CD4-positive, alpha-beta memory T cell (primary cell): ENCODE measurements at regions of chr19 and their contacts with region 1.

Region 1: GRCh38 chr19:47013041-47013517 is 6.6 kb upstream of the NPAS1 start:
- DNase-seq: peak; percentile 51 to 62 (median 53)
- H3K4me3 ChIP-seq: no peak overlapping the region
- H3K4me3 Mint-ChIP-seq: peak overlapping the region in 6 of 8 donors; percentile 6 to 65 (median 30)
- H3K27ac ChIP-seq: no peak overlapping the region
- H3K27ac Mint-ChIP-seq: peak overlapping the region in 2 of 7 donors; percentile 53 to 57
- H3K4me1 ChIP-seq: peaks cover 7% of the 10 kb centered on the region
- H3K4me1 Mint-ChIP-seq: peaks cover 8 to 9% (median 9%) of the 10 kb centered on the region in 4 donors
- H3K27me3 ChIP-seq: no peaks in the 10 kb centered on the region
- H3K27me3 Mint-ChIP-seq: peaks cover 5 to 10% of the 10 kb centered on the region in 2 donors

Region 2: DNA sequence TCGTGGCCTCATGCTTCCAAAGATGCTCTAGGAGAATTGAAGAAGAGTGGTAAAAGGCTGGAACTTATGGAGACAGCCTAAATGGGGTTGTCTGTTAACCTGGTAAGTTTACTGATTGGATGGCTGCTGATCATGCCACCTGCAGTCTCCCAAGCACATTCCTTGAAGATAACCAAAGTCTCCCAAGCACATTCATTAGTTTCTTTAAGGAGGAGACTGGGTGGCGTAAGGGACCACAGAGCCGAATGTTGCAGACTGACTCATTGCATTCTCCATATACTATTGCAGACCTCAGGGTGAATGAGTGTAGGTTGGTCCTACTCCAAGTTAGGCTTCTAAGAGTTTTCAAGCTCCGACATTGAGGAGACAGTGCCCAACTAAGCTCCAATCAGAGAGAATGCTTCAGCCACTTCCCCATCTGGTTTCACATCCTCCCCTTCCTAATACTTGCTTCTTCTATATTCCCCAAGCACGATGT is 888.4 kb before region 1 on chr19 and contains the start of gene IGFL3:
- CTCF ChIA-PET with region 1: no interaction called
- POLR2A ChIA-PET with region 1: no interaction called
- intact Hi-C with region 1: no loop called
- DNase-seq: no peak
- H3K4me3 ChIP-seq: no peak within 1 kb of the TSS
- H3K4me3 Mint-ChIP-seq: no peak within 1 kb of the TSS
- H3K27ac ChIP-seq: no peak within 1 kb of the TSS
- H3K27ac Mint-ChIP-seq: no peak within 1 kb of the TSS
- H3K4me1 ChIP-seq: no peaks in the 10 kb centered on the region
- H3K4me1 Mint-ChIP-seq: no peaks in the 10 kb centered on the region
- H3K27me3 ChIP-seq: no peaks in the 10 kb centered on the region
- H3K27me3 Mint-ChIP-seq: peaks cover 24 to 36% of the 10 kb centered on the region in 2 donors
- total RNA-seq, gene IGFL3: not detected

Region 3: DNA sequence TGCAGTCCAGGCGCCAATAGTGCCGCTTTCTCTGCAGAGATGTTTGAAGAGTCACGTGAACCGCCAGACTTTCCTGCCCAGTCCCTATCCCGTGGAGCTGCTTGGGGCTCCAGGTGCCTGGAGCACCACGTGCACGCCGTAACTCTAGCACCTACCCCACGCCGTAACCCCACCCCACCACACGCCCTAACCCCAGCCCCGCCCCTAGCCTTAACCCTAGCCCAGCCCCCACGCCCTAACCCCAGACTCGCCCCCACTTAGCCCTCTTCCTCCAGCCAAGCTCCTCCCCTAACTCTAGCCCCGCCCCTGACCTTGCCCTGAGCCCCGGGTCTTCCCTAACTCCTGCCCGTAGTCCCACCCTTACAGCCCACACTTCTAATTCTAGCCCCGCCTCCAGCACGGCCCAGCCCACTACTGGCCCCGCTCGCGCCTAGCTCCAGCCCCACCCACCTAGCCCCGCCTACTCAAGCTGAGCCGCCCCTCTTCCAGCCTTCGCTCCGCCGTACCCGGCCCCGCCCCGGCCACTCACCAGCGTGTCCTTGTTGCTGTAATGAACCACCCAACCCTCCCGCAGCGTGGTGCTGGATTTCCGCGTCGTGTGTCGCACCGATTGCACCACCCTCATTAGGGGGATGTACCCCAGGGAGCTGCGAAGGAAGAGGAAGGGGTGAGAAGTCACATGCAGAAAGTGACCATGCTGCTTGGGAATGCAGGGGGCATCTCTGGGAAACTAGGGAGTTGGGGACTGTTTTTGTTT is 315.7 kb before region 1 on chr19:
- CTCF ChIA-PET with region 1: no interaction called
- POLR2A ChIA-PET with region 1: no interaction called
- intact Hi-C with region 1: no loop called
- DNase-seq: peak in 1 of 5 donors; percentile 9
- H3K4me3 ChIP-seq: no peak overlapping the region
- H3K4me3 Mint-ChIP-seq: no peak overlapping the region
- H3K27ac ChIP-seq: no peak overlapping the region
- H3K27ac Mint-ChIP-seq: peak overlapping the region in 2 of 7 donors; percentile 22 to 32
- H3K4me1 ChIP-seq: no peaks in the 10 kb centered on the region
- H3K4me1 Mint-ChIP-seq: peaks cover 0 to 3% (median 0%) of the 10 kb centered on the region in 4 donors
- H3K27me3 ChIP-seq: no peaks in the 10 kb centered on the region
- H3K27me3 Mint-ChIP-seq: no peaks in the 10 kb centered on the region

Region 4: DNA sequence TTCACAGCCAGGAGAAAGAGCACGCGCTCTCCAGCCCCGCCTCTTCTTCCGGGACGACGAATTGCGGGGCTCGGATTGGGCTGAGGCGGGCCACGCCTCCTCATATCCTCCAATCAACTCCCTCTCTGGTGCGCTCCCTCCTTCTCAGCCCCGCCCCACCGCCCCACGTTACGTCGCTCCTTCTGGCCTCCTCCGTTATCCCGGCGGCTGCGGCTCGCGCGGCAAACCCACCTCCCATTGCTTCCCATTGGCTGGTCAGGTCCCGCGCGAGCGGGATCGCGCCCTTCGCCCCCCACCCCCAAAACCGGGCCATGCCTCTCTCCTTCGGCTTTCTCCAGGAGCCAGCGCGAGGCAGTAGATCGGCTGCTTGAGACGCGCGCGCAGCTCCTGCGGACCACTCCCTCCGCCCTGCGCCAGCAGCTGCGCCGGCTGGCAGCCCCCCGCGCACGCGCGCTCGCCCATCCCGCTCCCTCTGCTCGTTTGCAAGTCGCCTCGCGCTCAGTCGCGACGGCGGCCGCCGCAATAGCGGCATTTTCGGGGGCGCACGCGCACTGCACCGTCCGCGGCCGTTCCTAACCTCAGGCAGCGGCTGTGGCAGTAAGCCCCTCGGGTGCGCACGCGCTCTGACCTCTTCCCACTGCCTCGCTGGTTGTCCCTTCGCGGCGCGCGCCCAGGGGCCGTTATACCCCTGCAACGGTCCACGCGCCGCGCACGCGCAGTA is 152.8 kb before region 1 on chr19:
- CTCF ChIA-PET with region 1: interaction called, 26 read pairs
- POLR2A ChIA-PET with region 1: interaction called, 6 read pairs
- intact Hi-C with region 1: loop called (anchors 5 kb)
- DNase-seq: peak; percentile 93 to 96 (median 94)
- H3K4me3 ChIP-seq: peak overlapping the region; percentile 42 to 78
- H3K4me3 Mint-ChIP-seq: peak overlapping the region; percentile 91 to 98 (median 95)
- H3K27ac ChIP-seq: peak overlapping the region; percentile 79
- H3K27ac Mint-ChIP-seq: peak overlapping the region; percentile 94 to 99 (median 97)
- H3K4me1 ChIP-seq: peaks cover 62% of the 10 kb centered on the region
- H3K4me1 Mint-ChIP-seq: peaks cover 19 to 22% (median 19%) of the 10 kb centered on the region in 4 donors
- H3K27me3 ChIP-seq: no peaks in the 10 kb centered on the region
- H3K27me3 Mint-ChIP-seq: no peaks in the 10 kb centered on the region

Region 5: GRCh38 chr19:46924874-46925547 is 88.1 kb before region 1 on chr19:
- CTCF ChIA-PET with region 1: interaction called, 11 read pairs
- POLR2A ChIA-PET with region 1: no interaction called
- intact Hi-C with region 1: no loop called
- DNase-seq: no peak
- H3K4me3 ChIP-seq: no peak overlapping the region
- H3K4me3 Mint-ChIP-seq: peak overlapping the region in 7 of 8 donors; percentile 62 to 74 (median 74)
- H3K27ac ChIP-seq: no peak overlapping the region
- H3K27ac Mint-ChIP-seq: peak overlapping the region in 6 of 7 donors; percentile 38 to 88 (median 76)
- H3K4me1 ChIP-seq: peaks cover 47% of the 10 kb centered on the region
- H3K4me1 Mint-ChIP-seq: peaks cover 44 to 68% (median 56%) of the 10 kb centered on the region in 4 donors
- H3K27me3 ChIP-seq: no peaks in the 10 kb centered on the region
- H3K27me3 Mint-ChIP-seq: no peaks in the 10 kb centered on the region

Region 6: DNA sequence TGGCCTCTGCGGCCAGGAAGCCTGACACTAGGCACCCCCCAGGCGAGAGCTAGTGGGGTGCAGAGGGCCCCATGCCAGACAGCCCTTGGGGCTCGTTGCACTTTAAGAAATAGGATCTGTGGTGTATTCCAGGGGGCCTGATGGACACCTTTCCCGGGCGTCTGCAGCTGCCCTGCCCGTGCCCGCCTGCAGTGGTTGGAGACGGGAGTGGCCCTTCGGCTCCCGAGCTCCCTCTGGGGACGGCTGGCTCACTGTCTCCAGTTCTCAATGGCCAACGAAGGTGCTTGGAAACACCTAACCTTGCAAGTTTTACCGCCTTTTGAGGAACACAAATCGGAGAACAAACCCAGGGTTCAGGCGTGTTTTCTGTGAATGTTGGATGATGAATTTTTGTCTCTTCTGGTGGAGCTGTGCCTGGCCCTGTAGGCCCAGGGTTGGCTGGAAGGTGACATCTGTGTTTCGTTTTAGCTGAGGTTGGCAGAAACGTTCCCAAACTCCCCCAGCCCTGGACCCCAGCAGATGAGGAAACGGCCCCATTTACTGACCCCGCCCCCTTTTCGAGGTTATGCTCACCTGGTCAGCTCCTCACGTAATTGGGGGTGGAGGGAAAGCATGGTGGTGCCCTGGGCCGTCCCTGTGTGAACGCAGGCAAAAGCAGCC is 10.8 kb before region 1 on chr19:
- CTCF ChIA-PET with region 1: interaction called, 39 read pairs
- POLR2A ChIA-PET with region 1: interaction called, 6 read pairs
- intact Hi-C with region 1: no loop called
- DNase-seq: no peak
- H3K4me3 ChIP-seq: no peak overlapping the region
- H3K4me3 Mint-ChIP-seq: no peak overlapping the region
- H3K27ac ChIP-seq: no peak overlapping the region
- H3K27ac Mint-ChIP-seq: no peak overlapping the region
- H3K4me1 ChIP-seq: peaks cover 11% of the 10 kb centered on the region
- H3K4me1 Mint-ChIP-seq: peaks cover 11 to 19% (median 13%) of the 10 kb centered on the region in 4 donors
- H3K27me3 ChIP-seq: no peaks in the 10 kb centered on the region
- H3K27me3 Mint-ChIP-seq: no peaks in the 10 kb centered on the region

Region 7: DNA sequence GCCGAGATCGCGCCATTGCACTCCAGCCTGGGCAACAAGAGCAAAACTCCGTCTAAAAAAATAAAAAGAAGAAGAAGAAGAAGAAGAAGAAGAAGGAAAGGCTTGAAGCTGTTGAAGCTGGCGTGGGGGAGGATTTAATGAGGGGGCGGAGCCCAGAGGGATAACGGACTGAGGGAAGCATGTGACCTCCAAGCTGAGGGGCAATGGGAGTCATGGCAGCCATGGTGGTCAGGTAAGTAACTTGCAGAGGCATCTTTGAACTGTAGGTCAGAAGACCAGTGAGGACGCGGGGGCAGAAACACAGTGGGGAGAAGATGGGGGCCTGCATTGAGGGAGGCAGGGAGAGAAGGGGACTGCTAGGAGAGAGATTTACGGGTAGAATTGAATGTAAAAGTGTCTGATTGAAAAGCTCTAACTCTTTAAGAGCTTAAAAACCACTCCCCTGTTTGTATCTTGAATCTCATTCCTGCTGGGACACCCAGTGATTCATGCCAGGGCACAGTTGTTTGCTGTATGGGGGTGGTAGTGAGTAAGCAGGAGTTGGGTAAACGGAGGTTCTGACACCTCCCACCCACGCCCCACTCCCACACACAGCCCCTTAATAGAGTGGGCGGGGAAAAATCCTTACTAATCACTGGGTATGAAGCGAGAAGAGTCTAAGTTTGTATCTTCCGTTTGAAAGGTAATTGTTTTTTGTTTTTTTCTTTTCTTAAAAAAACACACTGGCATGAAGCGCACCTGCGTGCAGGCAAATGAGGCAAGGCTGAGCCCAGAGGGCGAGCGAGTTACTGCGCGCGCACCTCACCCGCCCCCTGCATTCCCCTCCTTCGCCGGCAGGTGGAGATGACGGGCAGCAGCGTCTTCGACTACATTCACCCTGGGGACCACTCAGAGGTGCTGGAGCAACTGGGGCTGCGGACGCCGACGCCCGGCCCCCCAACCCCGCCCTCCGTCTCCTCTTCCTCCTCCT is 22.3 kb after region 1 on chr19:
- CTCF ChIA-PET with region 1: interaction called, 43 read pairs
- POLR2A ChIA-PET with region 1: no interaction called
- intact Hi-C with region 1: loop called (anchors 1 kb)
- DNase-seq: peak; percentile 93 to 98 (median 94)
- H3K4me3 ChIP-seq: peak overlapping the region; percentile 36 to 44
- H3K4me3 Mint-ChIP-seq: peak overlapping the region; percentile 84 to 98 (median 88)
- H3K27ac ChIP-seq: no peak overlapping the region
- H3K27ac Mint-ChIP-seq: peak overlapping the region; percentile 73 to 90 (median 87)
- H3K4me1 ChIP-seq: peaks cover 23% of the 10 kb centered on the region
- H3K4me1 Mint-ChIP-seq: peaks cover 11 to 32% (median 21%) of the 10 kb centered on the region in 4 donors
- H3K27me3 ChIP-seq: no peaks in the 10 kb centered on the region
- H3K27me3 Mint-ChIP-seq: peaks cover 5 to 19% of the 10 kb centered on the region in 2 donors

Region 8: DNA sequence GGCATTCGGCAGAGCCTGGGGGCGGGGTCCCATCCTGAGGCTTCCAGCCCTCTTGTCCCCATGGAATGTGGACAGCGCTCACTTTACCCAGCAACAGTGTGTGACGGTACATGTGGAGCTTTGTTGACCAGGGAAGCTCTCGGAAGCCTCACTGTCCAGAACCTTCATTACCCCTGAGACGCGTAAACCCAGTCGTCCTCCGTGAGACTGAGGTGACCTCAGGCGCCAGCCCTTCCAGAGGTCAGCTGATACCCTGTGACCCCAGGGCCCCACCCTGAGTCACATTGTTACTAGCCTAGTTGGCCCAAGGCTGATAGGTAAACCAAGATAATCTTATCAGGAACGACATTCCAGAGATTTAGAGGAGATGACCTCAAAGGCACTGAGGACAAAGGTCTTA is 45.5 kb after region 1 on chr19:
- CTCF ChIA-PET with region 1: no interaction called
- POLR2A ChIA-PET with region 1: no interaction called
- intact Hi-C with region 1: no loop called
- DNase-seq: no peak
- H3K4me3 ChIP-seq: no peak overlapping the region
- H3K4me3 Mint-ChIP-seq: no peak overlapping the region
- H3K27ac ChIP-seq: no peak overlapping the region
- H3K27ac Mint-ChIP-seq: no peak overlapping the region
- H3K4me1 ChIP-seq: no peaks in the 10 kb centered on the region
- H3K4me1 Mint-ChIP-seq: peaks cover 0 to 1% (median 0%) of the 10 kb centered on the region in 4 donors
- H3K27me3 ChIP-seq: no peaks in the 10 kb centered on the region
- H3K27me3 Mint-ChIP-seq: peaks cover 0 to 2% of the 10 kb centered on the region in 2 donors